ENCODE measurements at regions of chr1 and their contacts with region 1.

Region 1: GRCh38 chr1:154558575-154559465 is at the start of gene UBE2Q1:
- DNase-seq: peak; percentile 87 to 98
- H3K4me3 ChIP-seq: peak within 1 kb of the TSS; percentile 98
- H3K27ac ChIP-seq: peak within 1 kb of the TSS; percentile 61
- H3K4me1 ChIP-seq: peaks cover 16% of the 10 kb centered on the region; the same call in 1 of the 2 replicates
- H3K27me3 ChIP-seq: no peaks in the 10 kb centered on the region; the same call in 1 of the 2 replicates
- CTCF ChIP-seq: no peak
- total RNA-seq, gene UBE2Q1: 52.8 and 63.3 TPM in 2 replicates

Region 2: GRCh38 chr1:154607609-154608396 is 49.0 kb after region 1 on chr1 and contains the start of gene ADAR:
- CTCF ChIA-PET with region 1: no interaction called
- POLR2A ChIA-PET with region 1: no interaction called
- intact Hi-C with region 1: loop called (anchors 1 kb)
- DNase-seq: peak; percentile 84 to 88
- H3K4me3 ChIP-seq: peak within 1 kb of the TSS; percentile 100
- H3K27ac ChIP-seq: peak within 1 kb of the TSS; percentile 90
- H3K4me1 ChIP-seq: peaks cover 23% of the 10 kb centered on the region
- H3K27me3 ChIP-seq: no peaks in the 10 kb centered on the region
- CTCF ChIP-seq: no peak
- total RNA-seq, gene ADAR: 99.6 and 120 TPM in 2 replicates

Region 3: DNA sequence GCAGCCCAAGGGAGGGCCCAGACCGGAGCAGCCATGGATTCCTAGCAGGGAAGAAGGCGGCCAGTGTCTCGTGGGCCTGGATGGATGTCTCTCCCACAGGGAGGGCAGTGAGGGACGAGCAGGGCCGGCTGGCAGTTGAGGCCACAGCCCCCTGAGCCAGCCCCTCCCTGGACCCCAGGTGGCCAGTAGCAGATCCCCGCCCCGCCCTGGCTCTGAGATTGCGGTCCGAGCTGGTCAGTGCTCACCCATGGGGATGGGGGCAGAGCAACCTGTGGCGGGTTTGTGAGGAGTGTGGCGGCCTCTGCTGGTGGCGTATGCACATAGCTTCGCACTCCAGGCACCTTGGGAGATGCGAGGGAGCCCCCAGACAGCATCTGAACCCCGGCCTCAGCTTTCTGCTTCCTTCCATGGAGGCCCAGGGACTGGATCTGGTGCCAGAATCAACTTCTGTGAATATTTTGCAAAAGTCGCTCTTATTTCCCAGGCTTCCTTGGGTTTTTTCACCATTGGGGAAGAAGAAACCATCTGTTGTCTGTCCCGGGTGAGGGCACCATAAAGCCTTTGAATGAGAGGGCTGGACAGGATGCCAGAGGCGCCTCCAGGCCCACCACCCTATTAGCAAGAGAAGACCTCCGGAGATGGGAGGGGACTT is 319.7 kb after region 1 on chr1:
- CTCF ChIA-PET with region 1: interaction called, 11 read pairs
- POLR2A ChIA-PET with region 1: no interaction called
- intact Hi-C with region 1: loop called (anchors 1 kb)
- DNase-seq: peak in 1 of 2 experiments; percentile 75
- H3K4me3 ChIP-seq: no peak overlapping the region
- H3K27ac ChIP-seq: no peak overlapping the region
- H3K4me1 ChIP-seq: peaks cover 13% of the 10 kb centered on the region
- H3K27me3 ChIP-seq: peaks cover 59% of the 10 kb centered on the region; the same call in 1 of the 2 replicates
- CTCF ChIP-seq: peak; percentile 89

Region 4: DNA sequence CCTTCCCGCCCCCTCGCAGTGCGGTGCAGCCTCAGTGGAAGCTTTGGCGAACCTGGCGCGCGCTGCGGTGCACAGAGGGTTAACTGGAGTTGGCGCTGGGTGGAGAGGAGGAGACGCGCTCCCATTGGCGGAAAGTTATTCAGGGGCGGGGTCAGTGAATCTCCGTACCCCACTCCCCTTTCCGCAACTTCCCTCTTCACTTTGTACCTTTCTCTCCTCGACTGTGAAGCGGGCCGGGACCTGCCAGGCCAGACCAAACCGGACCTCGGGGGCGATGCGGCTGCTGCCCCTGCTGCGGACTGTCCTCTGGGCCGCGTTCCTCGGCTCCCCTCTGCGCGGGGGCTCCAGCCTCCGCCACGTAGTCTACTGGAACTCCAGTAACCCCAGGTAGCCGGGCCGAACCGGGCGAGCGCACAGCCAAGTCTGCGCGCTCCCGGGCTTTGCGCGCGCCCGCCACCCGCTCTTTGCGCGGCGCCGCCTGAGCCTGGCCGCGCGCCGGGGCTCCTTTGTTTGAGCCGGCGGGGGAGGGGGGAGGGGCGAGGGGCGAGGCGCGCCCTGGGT is 504.8 kb after region 1 on chr1 and contains the start of gene EFNA4:
- CTCF ChIA-PET with region 1: no interaction called
- POLR2A ChIA-PET with region 1: no interaction called
- intact Hi-C with region 1: loop called (anchors 5 kb)
- DNase-seq: peak; percentile 79 to 82
- H3K4me3 ChIP-seq: peak within 1 kb of the TSS; percentile 74
- H3K27ac ChIP-seq: no peak within 1 kb of the TSS
- H3K4me1 ChIP-seq: peaks cover 10% of the 10 kb centered on the region
- H3K27me3 ChIP-seq: no peaks in the 10 kb centered on the region
- CTCF ChIP-seq: no peak
- total RNA-seq, gene EFNA4: 14.0 and 17.3 TPM in 2 replicates